Naive thymus-derived CD4-positive, alpha-beta T cell (primary cell): ENCODE measurements at regions of chr17 and their contacts with region 1.

Region 1: GRCh38 chr17:58517734-58518609 is 3.5 kb upstream of the MTMR4 start:
- DNase-seq: peak; percentile 92 to 100 (median 100)
- ATAC-seq: peak; percentile 89
- H3K4me3 ChIP-seq: peak overlapping the region; percentile 99
- H3K4me3 Mint-ChIP-seq: peak overlapping the region; percentile 92 to 98 (median 96)
- H3K27ac ChIP-seq: peak overlapping the region; percentile 84
- H3K27ac Mint-ChIP-seq: peak overlapping the region; percentile 82 to 97 (median 95)
- H3K4me1 ChIP-seq: peaks cover 20 to 28% of the 10 kb centered on the region in 2 donors
- H3K4me1 Mint-ChIP-seq: peaks cover 30 to 49% (median 46%) of the 10 kb centered on the region in 7 donors
- H3K27me3 ChIP-seq: no peaks in the 10 kb centered on the region
- H3K27me3 Mint-ChIP-seq: peaks cover 0 to 5% (median 0%) of the 10 kb centered on the region in 5 donors

Region 2: DNA sequence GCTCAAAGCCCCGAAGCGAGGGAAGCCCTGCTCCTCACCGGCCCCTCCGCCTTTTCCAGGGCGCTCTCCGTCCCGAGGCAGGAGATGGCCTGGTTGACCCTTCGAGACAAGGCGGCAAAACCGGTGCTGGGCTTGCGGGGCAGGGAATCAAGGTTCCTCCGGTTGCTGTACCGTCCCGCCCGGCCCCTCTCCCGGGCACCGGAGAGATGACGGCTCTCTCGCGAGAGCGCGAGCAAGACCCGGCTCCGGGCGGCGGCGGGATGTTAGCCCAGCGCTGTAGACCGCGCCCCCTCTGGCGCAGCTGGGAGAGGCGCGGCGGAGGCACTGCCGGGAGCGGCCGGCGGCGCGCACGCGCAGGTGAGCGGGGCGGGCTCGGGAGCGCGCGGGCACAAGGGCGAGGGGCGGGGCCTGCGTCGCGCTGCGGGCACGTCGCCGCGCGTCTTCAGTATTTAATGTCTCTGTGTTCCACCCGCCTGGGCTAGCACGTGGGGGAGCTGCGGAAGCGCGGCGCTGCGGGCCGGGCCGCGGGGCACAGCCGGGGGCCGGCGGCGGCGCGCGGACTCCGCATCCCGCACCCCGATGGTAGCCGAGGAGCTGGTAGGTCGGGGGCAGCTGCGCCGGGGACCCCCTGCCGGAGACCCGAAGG is 1433.0 kb before region 1 on chr17 and contains the start of gene AKAP1:
- CTCF ChIA-PET with region 1: no interaction called
- POLR2A ChIA-PET with region 1: no interaction called
- intact Hi-C with region 1: loop called in 1 of 2 experiments (anchors 2 kb)
- DNase-seq: peak; percentile 91 to 98 (median 97)
- ATAC-seq: peak; percentile 95
- H3K4me3 ChIP-seq: peak within 1 kb of the TSS; percentile 96
- H3K4me3 Mint-ChIP-seq: peak within 1 kb of the TSS; percentile 89 to 95 (median 92)
- H3K27ac ChIP-seq: peak within 1 kb of the TSS; percentile 91
- H3K27ac Mint-ChIP-seq: peak within 1 kb of the TSS; percentile 86 to 95 (median 93)
- H3K4me1 ChIP-seq: peaks cover 9 to 12% of the 10 kb centered on the region in 2 donors
- H3K4me1 Mint-ChIP-seq: peaks cover 27 to 43% (median 34%) of the 10 kb centered on the region in 7 donors
- H3K27me3 ChIP-seq: no peaks in the 10 kb centered on the region
- H3K27me3 Mint-ChIP-seq: peaks cover 0 to 12% (median 0%) of the 10 kb centered on the region in 5 donors
- total RNA-seq, gene AKAP1: 22.2 to 35.8 (median 34.3) TPM

Region 3: GRCh38 chr17:58219001-58219788 is 298.8 kb before region 1 on chr17 and contains the start of gene MKS1:
- CTCF ChIA-PET with region 1: no interaction called
- POLR2A ChIA-PET with region 1: no interaction called
- intact Hi-C with region 1: loop called in 1 of 2 experiments (anchors 1 kb)
- DNase-seq: peak; percentile 90 to 96 (median 94)
- ATAC-seq: peak; percentile 98
- H3K4me3 ChIP-seq: peak within 1 kb of the TSS; percentile 68
- H3K4me3 Mint-ChIP-seq: peak within 1 kb of the TSS; percentile 86 to 96 (median 94)
- H3K27ac ChIP-seq: peak within 1 kb of the TSS; percentile 77
- H3K27ac Mint-ChIP-seq: peak within 1 kb of the TSS; percentile 92 to 98 (median 97)
- H3K4me1 ChIP-seq: peaks cover 8 to 9% of the 10 kb centered on the region in 2 donors
- H3K4me1 Mint-ChIP-seq: peaks cover 7 to 33% (median 23%) of the 10 kb centered on the region in 7 donors
- H3K27me3 ChIP-seq: no peaks in the 10 kb centered on the region
- H3K27me3 Mint-ChIP-seq: peaks cover 0 to 18% (median 0%) of the 10 kb centered on the region in 5 donors
- total RNA-seq, gene MKS1: 10.0 to 29.1 (median 19.7) TPM

Region 4: GRCh38 chr17:58577642-58578091 is 59.7 kb after region 1 on chr17:
- CTCF ChIA-PET with region 1: interaction called, 3 read pairs
- POLR2A ChIA-PET with region 1: no interaction called
- intact Hi-C with region 1: loop called in 1 of 2 experiments (anchors 2 kb)
- DNase-seq: peak in 8 of 9 donors; percentile 4 to 39 (median 18)
- ATAC-seq: no peak
- H3K4me3 ChIP-seq: no peak overlapping the region
- H3K4me3 Mint-ChIP-seq: no peak overlapping the region
- H3K27ac ChIP-seq: no peak overlapping the region
- H3K27ac Mint-ChIP-seq: no peak overlapping the region
- H3K4me1 ChIP-seq: no peaks in the 10 kb centered on the region
- H3K4me1 Mint-ChIP-seq: peaks cover 0 to 10% (median 0%) of the 10 kb centered on the region in 7 donors
- H3K27me3 ChIP-seq: no peaks in the 10 kb centered on the region
- H3K27me3 Mint-ChIP-seq: peaks cover 0 to 8% (median 0%) of the 10 kb centered on the region in 5 donors

Region 5: GRCh38 chr17:59004338-59005111 is 486.6 kb after region 1 on chr17:
- CTCF ChIA-PET with region 1: interaction called, 45 read pairs
- POLR2A ChIA-PET with region 1: interaction called, 33 read pairs
- intact Hi-C with region 1: loop called (anchors 1 kb)
- DNase-seq: peak; percentile 17 to 73 (median 60)
- ATAC-seq: peak; percentile 73
- H3K4me3 ChIP-seq: no peak overlapping the region
- H3K4me3 Mint-ChIP-seq: peak overlapping the region in 2 of 10 donors; percentile 9 to 12
- H3K27ac ChIP-seq: no peak overlapping the region
- H3K27ac Mint-ChIP-seq: peak overlapping the region; percentile 50 to 86 (median 84)
- H3K4me1 ChIP-seq: peaks cover 5 to 6% of the 10 kb centered on the region in 2 donors
- H3K4me1 Mint-ChIP-seq: peaks cover 5 to 32% (median 20%) of the 10 kb centered on the region in 7 donors
- H3K27me3 ChIP-seq: no peaks in the 10 kb centered on the region
- H3K27me3 Mint-ChIP-seq: no peaks in the 10 kb centered on the region

Region 6: DNA sequence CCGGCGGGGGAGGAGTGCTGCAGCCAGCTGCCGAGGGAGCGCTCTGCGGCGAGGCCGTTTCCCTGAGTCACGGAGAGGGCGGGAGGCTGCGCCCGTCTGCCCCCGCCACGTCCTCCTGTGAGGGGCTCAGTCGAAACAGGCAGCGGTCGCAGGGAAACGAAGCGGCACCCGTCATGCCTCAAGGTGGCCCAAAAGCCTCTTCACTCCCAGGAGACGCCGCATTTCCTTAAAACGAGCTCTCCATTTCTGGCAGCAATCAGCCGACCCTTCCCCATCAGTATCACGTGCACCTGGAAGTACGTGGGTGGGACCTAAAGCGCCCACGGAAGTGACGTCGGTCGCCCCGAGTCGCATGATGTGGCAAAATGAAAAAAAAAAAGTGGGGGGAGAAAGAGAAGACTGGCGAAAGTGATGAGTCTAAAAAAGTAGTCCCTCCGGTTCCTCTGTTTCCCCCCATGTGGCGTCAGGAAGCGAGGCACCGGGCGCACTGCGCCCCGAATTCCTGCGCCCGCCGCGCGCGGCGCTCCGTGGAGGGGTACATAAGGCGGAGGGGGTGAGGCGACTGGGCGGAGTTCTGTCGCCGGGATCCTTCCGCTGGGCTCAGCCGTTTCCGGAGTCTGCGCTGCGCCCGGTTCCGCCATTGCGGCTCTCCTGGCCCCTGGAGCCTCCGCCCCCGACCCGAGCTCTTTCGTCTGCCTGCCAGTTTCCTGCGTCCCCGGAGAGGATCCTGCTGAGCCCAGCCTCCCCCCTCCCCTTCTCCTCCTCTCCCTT is 1101.5 kb after region 1 on chr17 and contains the start of gene CLTC:
- CTCF ChIA-PET with region 1: no interaction called
- POLR2A ChIA-PET with region 1: no interaction called
- intact Hi-C with region 1: loop called (anchors 1 kb)
- DNase-seq: peak; percentile 89 to 96 (median 95)
- ATAC-seq: peak; percentile 91
- H3K4me3 ChIP-seq: peak within 1 kb of the TSS; percentile 80
- H3K4me3 Mint-ChIP-seq: peak within 1 kb of the TSS; percentile 92 to 100 (median 96)
- H3K27ac ChIP-seq: peak within 1 kb of the TSS; percentile 94
- H3K27ac Mint-ChIP-seq: peak within 1 kb of the TSS; percentile 94 to 100 (median 99)
- H3K4me1 ChIP-seq: peaks cover 12 to 32% of the 10 kb centered on the region in 2 donors
- H3K4me1 Mint-ChIP-seq: peaks cover 23 to 60% (median 51%) of the 10 kb centered on the region in 7 donors
- H3K27me3 ChIP-seq: no peaks in the 10 kb centered on the region
- H3K27me3 Mint-ChIP-seq: peaks cover 0 to 3% (median 0%) of the 10 kb centered on the region in 5 donors
- total RNA-seq, gene CLTC: 67.1 to 174 (median 88.4) TPM